ENCODE measurements at regions of chr5 and their contacts with region 1.

Region 1: DNA sequence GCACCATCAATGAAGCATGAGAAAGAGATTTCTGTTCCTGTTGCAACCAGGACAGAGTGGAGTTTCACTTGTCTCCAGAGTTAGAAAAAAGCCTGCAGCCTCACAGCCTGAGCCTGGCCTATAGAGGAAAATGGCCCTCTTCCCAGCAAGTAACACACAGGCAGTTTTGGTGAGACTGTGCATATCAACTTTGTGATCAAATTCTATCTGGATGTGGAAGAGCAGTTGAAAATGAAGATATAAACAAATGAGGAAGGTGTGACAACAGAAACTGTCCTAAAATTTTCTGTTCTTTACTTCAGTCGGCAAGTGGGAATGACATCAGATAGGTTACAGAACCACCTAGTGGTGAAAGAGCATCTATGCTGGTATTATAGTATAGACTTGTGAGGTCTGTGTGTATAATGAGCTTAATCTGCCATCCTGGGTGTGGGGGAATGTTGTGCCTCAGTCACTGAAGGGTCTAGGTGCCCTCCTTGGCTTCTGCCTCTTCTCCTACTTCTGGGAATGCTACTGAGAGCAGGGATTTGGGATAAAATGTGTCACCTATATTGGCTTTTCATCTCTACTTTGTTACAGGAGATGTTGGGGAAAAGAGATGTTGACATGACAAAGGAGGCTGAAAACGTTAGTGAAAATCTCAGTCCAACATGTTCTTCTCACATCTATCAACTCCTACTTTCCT is 28.2 kb downstream of the YIPF5 start:
- DNase-seq: peak; percentile 36
- H3K4me3 ChIP-seq: no peak overlapping the region
- H3K27ac ChIP-seq: peak overlapping the region in 1 of 2 experiments; percentile 30; a peak in 1 of 4 replicates
- H3K4me1 ChIP-seq: peaks cover 0 to 3% of the 10 kb centered on the region in 2 experiments; a peak in 1 of 4 replicates
- H3K27me3 ChIP-seq: no peaks in the 10 kb centered on the region
- CTCF ChIP-seq: peak; percentile 83
- EP300 ChIP-seq: no peak
- RAD21 ChIP-seq: peak; percentile 90

Region 2: DNA sequence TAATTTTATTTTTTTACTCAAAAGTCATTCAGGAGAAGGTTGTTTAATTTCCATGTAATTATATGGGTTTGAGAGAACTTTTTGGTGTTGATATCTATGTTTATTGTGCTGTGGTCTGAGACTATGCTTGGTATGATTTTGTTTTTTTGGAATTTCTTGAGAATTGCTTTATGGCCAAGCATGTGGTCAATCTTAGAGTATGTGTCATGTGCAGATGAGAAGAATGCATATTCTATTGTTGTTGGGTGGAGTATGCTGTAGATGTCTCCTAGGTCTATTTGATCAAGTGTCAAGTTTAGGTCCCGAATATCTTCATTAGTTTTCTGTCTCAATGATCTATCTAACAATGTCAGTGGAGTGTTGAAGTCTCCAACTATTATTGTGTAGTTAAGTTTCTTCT is 195.4 kb before region 1 on chr5:
- CTCF ChIA-PET with region 1: no interaction called
- POLR2A ChIA-PET with region 1: no interaction called
- DNase-seq: no peak
- H3K4me3 ChIP-seq: no peak overlapping the region
- H3K27ac ChIP-seq: no peak overlapping the region
- H3K4me1 ChIP-seq: no peaks in the 10 kb centered on the region
- H3K27me3 ChIP-seq: no peaks in the 10 kb centered on the region
- CTCF ChIP-seq: no peak
- EP300 ChIP-seq: no peak
- RAD21 ChIP-seq: no peak

Region 3: GRCh38 chr5:143968011-143968878 is 174.0 kb before region 1 on chr5:
- CTCF ChIA-PET with region 1: interaction called, 10 read pairs
- POLR2A ChIA-PET with region 1: no interaction called
- DNase-seq: peak; percentile 37
- H3K4me3 ChIP-seq: no peak overlapping the region
- H3K27ac ChIP-seq: no peak overlapping the region
- H3K4me1 ChIP-seq: peaks cover 0 to 5% of the 10 kb centered on the region in 2 experiments; a peak in 2 of 4 replicates
- H3K27me3 ChIP-seq: no peaks in the 10 kb centered on the region
- CTCF ChIP-seq: peak; percentile 71
- EP300 ChIP-seq: no peak
- RAD21 ChIP-seq: peak; percentile 81

Region 4: DNA sequence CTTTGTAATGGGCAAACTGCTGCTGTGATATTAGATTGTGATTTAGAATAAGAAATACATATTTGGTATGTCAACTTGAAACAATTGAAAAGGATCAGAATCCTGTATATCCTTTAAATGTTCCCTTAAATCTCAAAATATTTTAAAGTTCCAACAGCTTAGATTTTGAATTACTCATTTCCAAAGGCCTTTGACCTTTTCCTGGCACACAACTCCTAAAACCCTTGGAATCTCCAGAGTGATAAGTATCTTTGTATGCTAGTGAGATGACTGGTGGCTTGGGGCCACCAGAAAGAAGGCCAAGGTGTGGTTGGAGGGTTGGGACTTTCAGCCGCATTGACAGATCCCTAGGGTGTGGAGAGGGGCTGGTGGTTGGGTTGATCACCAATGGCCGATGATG is 76.5 kb before region 1 on chr5:
- CTCF ChIA-PET with region 1: no interaction called
- POLR2A ChIA-PET with region 1: no interaction called
- DNase-seq: no peak
- H3K4me3 ChIP-seq: no peak overlapping the region
- H3K27ac ChIP-seq: no peak overlapping the region
- H3K4me1 ChIP-seq: no peaks in the 10 kb centered on the region
- H3K27me3 ChIP-seq: no peaks in the 10 kb centered on the region
- CTCF ChIP-seq: no peak
- EP300 ChIP-seq: no peak
- RAD21 ChIP-seq: no peak

Region 5: DNA sequence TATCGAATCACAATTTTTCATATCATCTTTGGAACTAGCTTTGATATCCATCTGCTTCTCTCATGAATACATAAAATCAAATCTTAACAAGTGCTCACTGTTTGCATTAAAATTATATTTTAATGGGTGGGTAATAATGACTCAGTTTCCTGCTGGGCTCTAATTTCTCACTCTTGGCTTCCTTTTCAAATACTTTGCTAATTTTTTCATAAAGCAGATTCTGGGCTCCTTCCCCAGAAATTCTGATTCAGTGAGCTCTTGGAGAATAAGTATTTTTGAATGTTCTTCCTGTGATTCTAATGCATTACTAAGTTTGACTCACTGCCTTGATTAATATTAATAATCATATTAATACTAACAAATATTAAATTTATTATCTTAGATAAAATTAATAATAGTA is 20.7 kb before region 1 on chr5:
- CTCF ChIA-PET with region 1: interaction called, 12 read pairs
- POLR2A ChIA-PET with region 1: no interaction called
- DNase-seq: no peak
- H3K4me3 ChIP-seq: no peak overlapping the region
- H3K27ac ChIP-seq: no peak overlapping the region; a peak in 1 of 4 replicates
- H3K4me1 ChIP-seq: peaks cover 2 to 9% of the 10 kb centered on the region in 2 experiments; a peak in 3 of 4 replicates
- H3K27me3 ChIP-seq: no peaks in the 10 kb centered on the region
- CTCF ChIP-seq: no peak
- EP300 ChIP-seq: no peak
- RAD21 ChIP-seq: no peak

Region 6: DNA sequence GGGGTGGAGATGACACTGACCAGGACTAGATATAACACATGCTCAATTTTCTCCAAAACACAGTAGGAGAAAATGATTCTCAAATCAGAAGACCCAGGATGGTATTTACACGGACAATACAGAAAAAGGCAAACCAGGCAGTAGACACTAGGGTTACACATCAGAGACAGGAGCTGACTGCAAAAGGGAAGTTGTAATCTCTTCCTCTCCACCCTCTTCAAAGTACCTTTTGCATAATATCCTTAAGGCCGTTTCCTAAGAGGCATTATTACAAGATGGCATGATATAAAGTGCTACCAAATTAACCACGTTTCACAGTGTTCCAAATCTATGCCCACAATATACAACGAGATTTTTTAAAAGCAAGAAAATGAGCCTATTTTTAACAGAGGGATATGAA is 11.0 kb before region 1 on chr5:
- CTCF ChIA-PET with region 1: interaction called, 20 read pairs
- POLR2A ChIA-PET with region 1: no interaction called
- DNase-seq: no peak
- H3K4me3 ChIP-seq: no peak overlapping the region
- H3K27ac ChIP-seq: no peak overlapping the region
- H3K4me1 ChIP-seq: peaks cover 0 to 4% of the 10 kb centered on the region in 2 experiments; a peak in 1 of 4 replicates
- H3K27me3 ChIP-seq: no peaks in the 10 kb centered on the region
- CTCF ChIP-seq: no peak
- EP300 ChIP-seq: no peak
- RAD21 ChIP-seq: no peak

Region 7: DNA sequence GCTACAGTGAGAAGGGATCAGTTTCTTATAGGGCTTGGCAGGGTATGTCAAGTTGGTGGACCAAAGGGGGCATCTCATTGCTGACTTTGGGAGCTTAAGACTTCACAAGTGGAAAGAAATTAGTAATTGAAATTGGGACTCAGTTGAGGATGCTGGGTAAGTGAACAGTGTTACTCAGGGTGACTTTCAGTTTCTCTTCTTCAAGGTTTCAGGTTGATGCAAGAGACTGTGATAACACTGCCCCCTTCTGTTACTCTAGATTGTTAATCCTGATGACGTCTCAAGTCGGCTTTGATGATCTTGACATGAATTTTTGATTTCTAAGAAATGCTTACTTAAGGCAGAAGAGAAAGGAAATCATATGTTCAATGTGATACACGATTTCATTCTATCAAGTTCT is 49.7 kb after region 1 on chr5:
- CTCF ChIA-PET with region 1: no interaction called
- POLR2A ChIA-PET with region 1: no interaction called
- DNase-seq: no peak
- H3K4me3 ChIP-seq: peak overlapping the region in 1 of 2 experiments; percentile 29; a peak in 1 of 4 replicates
- H3K27ac ChIP-seq: no peak overlapping the region
- H3K4me1 ChIP-seq: peaks cover 8 to 20% of the 10 kb centered on the region in 2 experiments; a peak in 3 of 4 replicates
- H3K27me3 ChIP-seq: no peaks in the 10 kb centered on the region
- CTCF ChIP-seq: peak; percentile 61
- EP300 ChIP-seq: no peak
- RAD21 ChIP-seq: peak; percentile 35